ENCODE measurements at regions of chr7 and their contacts with region 1.

Region 1: DNA sequence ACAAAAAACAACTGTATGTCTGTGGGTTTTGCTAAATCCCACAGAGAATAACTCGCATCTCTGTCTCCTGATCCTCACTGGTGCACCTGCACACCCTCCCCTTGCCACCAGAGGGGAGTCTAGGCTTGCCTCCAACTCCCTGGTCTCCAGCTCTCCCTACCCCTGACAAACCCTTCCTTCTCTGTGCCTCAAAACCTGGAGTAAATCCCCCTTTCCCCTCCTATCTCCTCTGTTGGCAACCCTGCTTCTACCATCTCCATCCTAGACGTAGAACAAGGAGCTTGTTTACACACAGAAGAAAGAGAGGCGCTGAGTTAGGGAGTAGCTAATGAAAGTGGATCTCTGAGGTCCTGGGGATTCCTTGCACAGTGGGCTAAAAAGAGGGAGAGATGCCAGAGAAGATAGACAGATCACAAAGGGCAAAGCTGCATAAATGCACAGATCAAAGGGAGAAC is 6.0 kb downstream of the MBLAC1 start:
- DNase-seq: peak; percentile 89
- H3K4me3 ChIP-seq: peak overlapping the region in 1 of 2 experiments; percentile 6; a peak in 1 of 4 replicates
- H3K27ac ChIP-seq: 0 out of 4 replicates have a peak overlapping the region, but pooled peaks of 1 of the 2 experiments have one; percentile 1
- H3K4me1 ChIP-seq: peaks cover 5 to 10% of the 10 kb centered on the region in 2 experiments; a peak in 2 of 4 replicates
- H3K27me3 ChIP-seq: no peaks in the 10 kb centered on the region
- CTCF ChIP-seq: peak; percentile 97
- EP300 ChIP-seq: no peak
- RAD21 ChIP-seq: peak; percentile 97

Region 2: DNA sequence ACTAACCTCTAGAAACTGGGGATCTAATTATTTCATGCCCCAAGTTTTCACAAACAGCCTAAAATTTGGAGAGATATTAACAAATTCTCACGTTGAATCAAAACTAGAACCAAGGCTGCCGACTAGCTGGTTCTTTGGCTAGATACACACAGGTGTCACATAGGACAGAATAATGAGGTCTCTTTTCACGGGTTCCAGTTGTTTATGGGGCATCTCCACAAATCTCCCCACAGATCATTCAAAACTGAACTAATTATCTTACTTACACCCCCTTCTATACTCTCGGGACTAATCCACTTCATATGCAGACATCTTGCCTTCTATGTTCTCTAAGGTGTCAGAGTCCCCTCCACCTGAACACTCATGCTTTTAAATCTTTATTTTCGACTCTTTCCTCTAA is 239.4 kb before region 1 on chr7:
- CTCF ChIA-PET with region 1: no interaction called
- POLR2A ChIA-PET with region 1: no interaction called
- DNase-seq: no peak
- H3K4me3 ChIP-seq: no peak overlapping the region
- H3K27ac ChIP-seq: no peak overlapping the region
- H3K4me1 ChIP-seq: peaks cover 0 to 5% of the 10 kb centered on the region in 2 experiments; a peak in 1 of 4 replicates
- H3K27me3 ChIP-seq: no peaks in the 10 kb centered on the region; the same call in 1 of the 2 replicates
- CTCF ChIP-seq: no peak
- EP300 ChIP-seq: no peak
- RAD21 ChIP-seq: no peak

Region 3: DNA sequence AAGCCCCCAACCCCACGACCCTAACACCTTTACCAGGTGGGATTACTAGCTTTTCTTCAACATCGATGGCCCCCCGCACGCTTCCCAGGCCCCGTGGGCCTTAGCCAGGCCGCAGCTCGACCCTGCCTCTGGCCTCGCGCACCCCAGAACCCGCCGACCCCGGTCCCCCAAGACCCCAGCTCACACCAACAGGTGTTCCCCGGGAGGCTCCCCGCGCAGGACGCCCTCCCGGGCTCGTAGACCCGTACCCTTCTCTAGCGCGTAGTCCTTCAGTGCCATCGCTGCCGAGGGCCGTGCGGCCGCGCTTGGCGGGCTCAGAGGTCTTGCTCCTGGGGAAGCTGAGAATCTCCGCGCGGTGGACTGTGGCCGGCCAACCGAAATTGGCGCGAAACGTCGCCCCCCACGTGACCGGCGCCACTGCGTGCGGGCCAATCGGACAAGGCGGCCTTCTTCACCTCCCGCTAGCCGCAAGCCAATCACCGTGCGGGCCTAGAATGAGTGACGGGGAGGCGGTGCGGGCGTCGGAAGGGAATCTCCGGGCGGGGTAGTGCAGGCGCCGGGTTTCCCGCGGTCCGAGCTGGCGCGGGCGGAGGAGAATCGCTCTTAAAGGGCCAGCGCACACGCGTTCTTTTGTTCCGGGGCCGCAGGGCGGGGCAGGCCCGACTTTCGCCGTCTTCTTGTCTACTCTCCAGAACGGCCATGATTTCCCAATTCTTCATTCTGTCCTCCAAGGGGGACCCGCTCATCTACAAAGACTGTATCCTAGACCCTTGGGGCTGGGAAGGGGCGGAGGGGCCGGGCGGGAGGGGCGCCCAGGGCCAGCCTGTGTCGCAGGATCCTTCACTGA is 31.5 kb before region 1 on chr7 and contains the starts of genes AP4M1 and MCM7:
- CTCF ChIA-PET with region 1: interaction called, 74 read pairs
- POLR2A ChIA-PET with region 1: interaction called, 19 read pairs
- DNase-seq: peak; percentile 97
- H3K4me3 ChIP-seq: peak within 1 kb of the TSS; percentile 70 to 99
- H3K27ac ChIP-seq: peak within 1 kb of the TSS; percentile 94 to 95
- H3K4me1 ChIP-seq: peaks cover 24 to 33% of the 10 kb centered on the region in 2 experiments
- H3K27me3 ChIP-seq: no peaks in the 10 kb centered on the region
- CTCF ChIP-seq: no peak
- EP300 ChIP-seq: no peak; a peak in 1 of 4 replicates
- RAD21 ChIP-seq: no peak
- polyA plus RNA-seq, gene AP4M1: 35.0 and 39.2 TPM in 2 replicates
- polyA plus RNA-seq, gene MCM7: 235 and 241 TPM in 2 replicates

Region 4: DNA sequence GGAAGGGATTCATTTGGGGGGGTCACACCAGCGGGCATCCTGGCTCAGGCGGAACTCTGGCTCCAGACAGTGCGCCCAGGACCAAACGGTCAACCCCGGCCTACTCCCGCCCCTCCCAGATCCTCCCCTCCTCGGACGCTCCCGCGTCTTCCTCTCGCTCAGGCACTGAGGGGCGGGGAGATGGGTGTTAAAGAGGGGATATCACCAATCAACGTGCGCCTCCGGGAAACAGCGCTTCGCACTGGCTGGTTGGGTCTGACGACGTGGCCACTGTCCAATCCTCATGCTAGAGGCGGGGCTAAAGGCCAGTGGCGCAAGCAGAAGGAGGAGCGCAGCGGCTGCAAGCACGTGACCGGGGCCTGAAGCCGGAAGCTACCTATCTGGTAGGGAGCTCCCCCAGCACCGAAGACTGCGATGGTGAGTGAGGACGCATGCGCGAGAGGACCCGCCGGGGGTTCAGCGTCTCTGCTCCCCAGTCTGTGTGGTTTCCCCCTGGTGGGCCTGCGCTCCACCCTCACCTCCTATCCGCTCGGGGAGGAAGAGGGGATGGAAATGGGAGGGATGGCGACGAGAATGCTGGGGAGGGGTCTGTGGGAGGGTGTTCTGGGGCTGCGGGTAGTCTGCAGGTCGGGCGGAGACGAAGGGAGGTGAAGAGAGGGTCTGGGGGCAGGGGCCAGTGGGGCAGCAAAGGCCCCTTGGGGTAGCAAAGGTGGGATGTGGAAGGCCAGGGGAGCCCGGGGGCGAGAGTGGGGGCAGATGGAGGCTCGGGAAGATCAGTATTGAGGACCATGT is 16.0 kb after region 1 on chr7 and contains the start of gene LAMTOR4:
- CTCF ChIA-PET with region 1: interaction called, 73 read pairs
- POLR2A ChIA-PET with region 1: interaction called, 5 read pairs
- DNase-seq: peak; percentile 98
- H3K4me3 ChIP-seq: peak within 1 kb of the TSS; percentile 66 to 83
- H3K27ac ChIP-seq: peak within 1 kb of the TSS; percentile 57 to 80; a peak in 3 of 4 replicates
- H3K4me1 ChIP-seq: peaks cover 5 to 7% of the 10 kb centered on the region in 2 experiments; a peak in 2 of 4 replicates
- H3K27me3 ChIP-seq: no peaks in the 10 kb centered on the region
- CTCF ChIP-seq: peak; percentile 13; the same call in 1 of the 2 replicates
- EP300 ChIP-seq: peak in 1 of 2 experiments; percentile 17; a peak in 2 of 4 replicates
- RAD21 ChIP-seq: no peak
- polyA plus RNA-seq, gene LAMTOR4: 600 and 630 TPM in 2 replicates

Region 5: DNA sequence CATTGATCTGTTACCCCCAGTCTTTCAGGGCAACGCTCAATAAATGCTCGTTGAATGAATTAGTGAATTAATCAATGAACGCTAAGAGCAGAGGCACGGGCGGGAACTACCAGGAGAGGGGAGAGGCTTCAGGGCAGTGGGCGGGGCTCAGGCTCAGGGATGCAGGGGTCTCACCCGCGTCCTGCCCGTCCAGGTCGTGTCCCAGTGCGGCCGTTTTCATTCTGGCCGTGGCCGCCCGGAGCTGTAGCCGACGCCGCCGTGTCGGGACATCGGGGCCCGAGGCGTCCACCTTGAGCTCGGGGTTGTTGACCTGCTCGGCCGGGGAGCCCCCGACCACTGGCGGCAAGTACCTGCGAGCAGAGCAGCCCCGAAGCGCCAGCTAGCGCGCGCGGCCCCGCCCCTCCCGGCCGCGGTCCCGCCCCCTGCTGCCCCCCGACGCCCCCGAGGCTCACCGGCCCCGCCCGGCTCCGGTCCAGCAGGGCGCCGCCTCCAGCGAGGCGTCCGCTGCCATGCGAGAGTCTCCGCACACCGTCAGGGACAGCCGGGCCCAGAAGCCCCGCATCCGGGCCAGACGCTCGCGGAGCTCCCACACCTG is 38.5 kb after region 1 on chr7:
- CTCF ChIA-PET with region 1: interaction called, 54 read pairs
- POLR2A ChIA-PET with region 1: interaction called, 3 read pairs
- DNase-seq: no peak
- H3K4me3 ChIP-seq: no peak overlapping the region
- H3K27ac ChIP-seq: no peak overlapping the region
- H3K4me1 ChIP-seq: peaks cover 0 to 27% of the 10 kb centered on the region in 2 experiments; a peak in 1 of 4 replicates
- H3K27me3 ChIP-seq: no peaks in the 10 kb centered on the region
- CTCF ChIP-seq: no peak
- EP300 ChIP-seq: no peak
- RAD21 ChIP-seq: no peak

Region 6: GRCh38 chr7:100195222-100195621 is 62.5 kb after region 1 on chr7:
- CTCF ChIA-PET with region 1: interaction called, 18 read pairs
- POLR2A ChIA-PET with region 1: no interaction called
- DNase-seq: no peak
- H3K4me3 ChIP-seq: no peak overlapping the region
- H3K27ac ChIP-seq: no peak overlapping the region
- H3K4me1 ChIP-seq: peaks cover 0 to under 1% of the 10 kb centered on the region in 2 experiments; a peak in 1 of 4 replicates
- H3K27me3 ChIP-seq: no peaks in the 10 kb centered on the region; the same call in 1 of the 2 replicates
- CTCF ChIP-seq: no peak
- EP300 ChIP-seq: no peak
- RAD21 ChIP-seq: no peak

Region 7: DNA sequence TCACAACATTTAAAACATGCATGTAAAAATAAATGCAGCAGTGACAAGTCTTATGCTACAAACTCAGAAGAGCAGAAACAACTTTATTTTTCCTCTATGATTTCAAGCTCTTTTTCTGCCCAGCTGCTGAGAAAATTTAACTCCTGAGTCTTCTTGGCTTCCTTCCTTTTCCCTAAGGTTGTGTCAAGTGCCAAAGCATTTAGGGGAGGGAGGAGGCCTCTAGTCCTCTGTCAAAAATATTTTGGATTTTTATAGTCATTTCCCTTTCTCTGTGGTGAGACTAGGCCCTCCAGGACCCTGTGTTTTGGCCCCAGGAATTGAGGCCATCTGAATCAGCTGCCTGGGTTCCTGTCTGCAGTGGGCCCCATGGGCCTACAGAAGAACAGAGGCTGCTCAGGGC is 214.2 kb after region 1 on chr7:
- CTCF ChIA-PET with region 1: interaction called, 32 read pairs
- POLR2A ChIA-PET with region 1: no interaction called
- DNase-seq: no peak
- H3K4me3 ChIP-seq: no peak overlapping the region
- H3K27ac ChIP-seq: no peak overlapping the region
- H3K4me1 ChIP-seq: peaks cover 0 to 6% of the 10 kb centered on the region in 2 experiments; a peak in 2 of 4 replicates
- H3K27me3 ChIP-seq: no peaks in the 10 kb centered on the region
- CTCF ChIP-seq: no peak
- EP300 ChIP-seq: no peak
- RAD21 ChIP-seq: no peak

Measured in SK-N-SH (cell line).